BJ (cell line): ENCODE measurements at regions of chr10 and their contacts with region 1.

Region 1: GRCh38 chr10:30534465-30535144 is 94.9 kb downstream of the LYZL2 start:
- DNase-seq: no peak
- H3K4me3 ChIP-seq: no peak overlapping the region
- H3K27me3 ChIP-seq: peaks cover 5% of the 10 kb centered on the region
- CTCF ChIP-seq: peak; percentile 74

Region 2: DNA sequence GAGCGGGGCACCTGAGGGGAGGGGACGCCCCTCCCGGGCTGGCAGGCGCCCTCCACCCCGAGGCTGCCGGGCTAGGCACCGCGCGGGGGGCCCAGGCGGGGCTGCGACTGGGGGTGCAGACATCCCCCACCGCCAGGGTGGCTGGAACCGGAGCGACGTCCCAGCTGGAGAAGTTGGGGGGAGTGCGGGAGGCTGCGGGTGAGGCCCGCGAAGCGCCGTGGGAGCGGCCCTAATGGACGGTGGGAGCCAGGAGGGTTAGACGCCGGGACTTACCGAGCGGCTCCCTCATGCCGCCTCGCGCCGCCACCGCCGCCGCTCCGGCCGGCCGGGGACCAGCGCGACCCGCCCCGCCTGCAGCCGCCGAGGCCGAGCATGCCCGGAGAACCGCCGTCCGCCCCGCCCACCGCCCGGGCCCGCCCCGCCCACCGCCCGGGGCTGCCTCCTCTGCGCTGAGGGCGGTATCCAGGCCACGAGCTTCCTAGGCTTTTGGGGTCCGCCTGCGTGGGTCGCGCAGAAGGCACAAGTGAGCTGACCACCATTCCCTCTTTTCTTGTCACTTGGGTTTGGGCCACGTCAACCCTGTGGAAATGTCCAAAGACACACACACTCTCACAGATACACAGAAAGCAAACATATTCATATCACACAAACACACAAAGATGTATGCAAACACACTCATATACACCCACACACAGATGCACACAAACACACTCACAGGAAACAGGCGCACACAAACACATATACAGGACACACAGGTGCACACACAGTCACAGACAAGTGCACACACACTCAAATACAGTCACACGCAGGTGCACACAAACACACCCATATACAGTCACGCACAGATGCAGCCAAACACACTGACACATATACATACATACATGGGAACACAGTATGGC is 475.1 kb before region 1 on chr10 and contains the start of gene JCAD:
- CTCF ChIA-PET with region 1: no interaction called
- POLR2A ChIA-PET with region 1: no interaction called
- DNase-seq: no peak
- H3K4me3 ChIP-seq: peak within 1 kb of the TSS; percentile 76
- H3K27me3 ChIP-seq: no peaks in the 10 kb centered on the region
- CTCF ChIP-seq: no peak
- polyA plus RNA-seq, gene JCAD: 13.9 TPM in 2 replicates

Region 3: GRCh38 chr10:30207485-30208052 is 327.0 kb before region 1 on chr10:
- CTCF ChIA-PET with region 1: no interaction called
- POLR2A ChIA-PET with region 1: no interaction called
- DNase-seq: no peak
- H3K4me3 ChIP-seq: no peak overlapping the region
- H3K27me3 ChIP-seq: peaks cover 2% of the 10 kb centered on the region; the same call in 1 of the 2 replicates
- CTCF ChIP-seq: no peak

Region 4: DNA sequence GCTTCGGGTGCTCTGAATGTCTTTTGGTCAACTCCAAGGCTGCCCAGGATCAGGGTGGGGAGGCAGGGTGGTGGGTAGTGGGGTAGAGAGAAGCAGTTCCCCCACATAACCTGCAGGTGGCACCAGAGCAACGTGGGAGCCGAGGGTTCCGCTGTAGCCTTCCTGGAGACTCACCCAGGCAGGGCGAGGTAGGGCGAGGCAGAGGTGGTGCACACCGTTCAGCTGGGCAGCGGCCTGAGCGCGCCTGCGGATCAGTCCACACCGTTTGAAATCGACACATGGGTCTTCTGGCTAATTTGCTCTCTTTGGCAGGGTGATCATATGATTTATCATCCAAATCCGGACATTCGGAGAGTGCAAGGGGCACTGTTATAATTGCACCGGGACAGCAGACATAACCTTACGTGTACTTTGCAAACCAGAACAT is 142.0 kb before region 1 on chr10:
- CTCF ChIA-PET with region 1: interaction called, 34 read pairs
- POLR2A ChIA-PET with region 1: no interaction called
- DNase-seq: no peak
- H3K4me3 ChIP-seq: no peak overlapping the region
- H3K27me3 ChIP-seq: peaks cover 7% of the 10 kb centered on the region
- CTCF ChIP-seq: peak; percentile 97

Region 5: DNA sequence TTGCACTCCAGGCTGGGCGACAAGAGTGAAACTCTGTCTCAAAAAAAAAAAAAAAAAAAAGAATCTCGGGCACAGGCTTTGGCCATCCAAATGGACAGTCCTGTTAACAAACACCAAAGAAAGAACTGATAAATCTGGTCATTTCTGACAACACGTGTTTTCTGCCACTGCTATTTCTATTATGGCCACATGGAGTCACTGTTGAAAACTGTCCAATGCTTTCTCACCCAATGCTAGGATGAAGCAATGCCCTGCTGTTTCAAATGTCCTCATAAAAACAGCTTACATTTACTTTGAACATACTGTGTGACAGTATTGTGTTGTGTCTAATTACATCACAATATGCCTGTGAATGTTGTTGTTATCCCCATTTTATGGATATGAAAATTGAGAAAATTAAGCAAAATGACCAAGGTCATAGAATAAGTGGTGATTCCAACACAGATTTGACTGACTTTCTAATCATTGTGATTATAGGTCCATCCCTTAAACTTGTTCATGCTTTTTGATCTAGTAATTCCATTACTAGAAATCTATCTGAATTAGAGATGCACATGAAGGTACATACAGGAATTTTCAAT is 120.5 kb before region 1 on chr10:
- CTCF ChIA-PET with region 1: interaction called, 27 read pairs
- POLR2A ChIA-PET with region 1: no interaction called
- DNase-seq: no peak
- H3K4me3 ChIP-seq: no peak overlapping the region
- H3K27me3 ChIP-seq: 0 out of 2 replicates have a peak, but pooled peaks cover 1% of the 10 kb centered on the region
- CTCF ChIP-seq: peak; percentile 82

Region 6: DNA sequence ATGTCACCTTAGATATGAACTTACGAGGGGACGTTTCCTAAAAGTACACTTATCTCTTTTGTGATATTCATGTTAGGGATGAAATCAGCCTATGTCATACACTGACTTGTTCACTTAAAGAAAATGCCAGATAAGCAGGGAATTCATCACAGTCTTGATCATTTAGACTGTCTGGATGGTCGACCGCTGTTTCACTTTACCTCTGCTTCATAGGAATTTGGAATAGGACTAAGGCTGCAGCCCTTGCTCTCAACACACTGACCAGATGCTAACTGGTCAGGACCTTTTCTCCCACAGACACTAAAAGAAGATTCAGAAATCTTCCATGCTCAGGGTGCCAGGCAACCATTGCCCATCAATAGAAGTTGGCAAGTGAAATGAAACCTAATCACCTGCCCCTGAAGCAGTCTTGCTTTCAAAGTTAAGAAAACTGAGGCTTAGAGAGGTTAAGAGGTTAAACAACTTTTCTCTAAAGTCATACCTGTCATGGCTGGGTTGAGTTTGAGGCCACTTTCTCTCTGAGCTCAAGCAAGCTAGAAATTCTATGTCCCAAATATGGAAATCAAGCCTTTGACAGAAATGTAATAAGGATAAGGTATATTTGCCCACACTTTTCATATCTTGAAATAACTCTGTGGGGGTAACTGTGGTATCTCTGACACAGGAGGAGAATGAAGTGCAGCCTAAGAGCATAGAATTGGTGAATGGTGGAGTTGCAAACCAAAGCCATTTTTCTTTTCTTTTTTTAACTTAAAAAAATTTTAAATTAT is 23.5 kb before region 1 on chr10:
- CTCF ChIA-PET with region 1: no interaction called
- POLR2A ChIA-PET with region 1: no interaction called
- DNase-seq: no peak
- H3K4me3 ChIP-seq: no peak overlapping the region
- H3K27me3 ChIP-seq: no peaks in the 10 kb centered on the region; the same call in 1 of the 2 replicates
- CTCF ChIP-seq: no peak

Region 7: DNA sequence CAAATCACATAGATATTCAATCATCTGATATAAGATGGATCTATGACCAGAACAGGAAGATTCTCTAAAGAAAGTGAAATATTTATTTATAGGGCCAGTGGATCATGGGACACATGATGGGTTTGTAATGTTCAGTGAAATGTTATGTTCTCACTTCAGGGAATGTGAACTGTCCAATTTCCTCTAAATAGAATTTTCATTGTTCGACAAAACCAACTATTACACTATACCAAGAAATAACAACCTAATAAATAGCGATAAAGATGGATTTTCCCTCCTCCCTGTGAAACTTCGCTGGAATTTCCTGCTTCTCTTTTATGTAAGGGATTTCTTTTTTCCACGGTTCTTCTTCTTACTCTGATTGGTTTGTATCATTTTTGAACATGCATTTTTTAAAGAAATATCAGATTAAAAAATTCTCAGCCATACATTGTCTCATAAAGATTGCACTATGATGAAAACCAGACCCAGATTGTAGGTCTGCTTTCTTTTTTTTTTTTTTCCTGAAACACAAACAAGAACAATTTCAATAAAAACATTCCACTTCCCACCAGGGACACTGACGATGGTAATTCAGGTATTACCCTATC is 644.6 kb after region 1 on chr10:
- CTCF ChIA-PET with region 1: no interaction called
- POLR2A ChIA-PET with region 1: no interaction called
- DNase-seq: no peak
- H3K4me3 ChIP-seq: no peak overlapping the region
- H3K27me3 ChIP-seq: no peaks in the 10 kb centered on the region
- CTCF ChIP-seq: no peak